Activated CD8-positive, alpha-beta T cell treated with anti-CD3 and anti-CD28 coated beads, Interleukin-2, amount 10 ng/mL, durations not matched to agents 7 days and 5 days (primary cell): ENCODE measurements at regions of chr1 and their contacts with region 1.

Region 1: GRCh38 chr1:245045087-245045881 is 109.5 kb upstream of the KIF26B start:
- DNase-seq: no peak
- ATAC-seq: no peak
- H3K4me3 Mint-ChIP-seq: no peak overlapping the region
- H3K27ac Mint-ChIP-seq: no peak overlapping the region
- H3K4me1 Mint-ChIP-seq: peaks cover 9% of the 10 kb centered on the region
- H3K27me3 Mint-ChIP-seq: peaks cover 2% of the 10 kb centered on the region

Region 2: GRCh38 chr1:244801246-244801645 is 244.0 kb before region 1 on chr1:
- CTCF ChIA-PET with region 1: interaction called, 102 read pairs
- POLR2A ChIA-PET with region 1: no interaction called
- DNase-seq: peak; percentile 65
- ATAC-seq: peak; percentile 78
- H3K4me3 Mint-ChIP-seq: no peak overlapping the region
- H3K27ac Mint-ChIP-seq: no peak overlapping the region
- H3K4me1 Mint-ChIP-seq: peaks cover 5% of the 10 kb centered on the region
- H3K27me3 Mint-ChIP-seq: peaks cover 5% of the 10 kb centered on the region

Region 3: GRCh38 chr1:244854865-244855578 is 190.3 kb before region 1 on chr1:
- CTCF ChIA-PET with region 1: interaction called, 41 read pairs
- POLR2A ChIA-PET with region 1: no interaction called
- DNase-seq: no peak
- ATAC-seq: peak; percentile 62
- H3K4me3 Mint-ChIP-seq: peak overlapping the region; percentile 48
- H3K27ac Mint-ChIP-seq: peak overlapping the region; percentile 72
- H3K4me1 Mint-ChIP-seq: peaks cover 83% of the 10 kb centered on the region
- H3K27me3 Mint-ChIP-seq: no peaks in the 10 kb centered on the region

Region 4: DNA sequence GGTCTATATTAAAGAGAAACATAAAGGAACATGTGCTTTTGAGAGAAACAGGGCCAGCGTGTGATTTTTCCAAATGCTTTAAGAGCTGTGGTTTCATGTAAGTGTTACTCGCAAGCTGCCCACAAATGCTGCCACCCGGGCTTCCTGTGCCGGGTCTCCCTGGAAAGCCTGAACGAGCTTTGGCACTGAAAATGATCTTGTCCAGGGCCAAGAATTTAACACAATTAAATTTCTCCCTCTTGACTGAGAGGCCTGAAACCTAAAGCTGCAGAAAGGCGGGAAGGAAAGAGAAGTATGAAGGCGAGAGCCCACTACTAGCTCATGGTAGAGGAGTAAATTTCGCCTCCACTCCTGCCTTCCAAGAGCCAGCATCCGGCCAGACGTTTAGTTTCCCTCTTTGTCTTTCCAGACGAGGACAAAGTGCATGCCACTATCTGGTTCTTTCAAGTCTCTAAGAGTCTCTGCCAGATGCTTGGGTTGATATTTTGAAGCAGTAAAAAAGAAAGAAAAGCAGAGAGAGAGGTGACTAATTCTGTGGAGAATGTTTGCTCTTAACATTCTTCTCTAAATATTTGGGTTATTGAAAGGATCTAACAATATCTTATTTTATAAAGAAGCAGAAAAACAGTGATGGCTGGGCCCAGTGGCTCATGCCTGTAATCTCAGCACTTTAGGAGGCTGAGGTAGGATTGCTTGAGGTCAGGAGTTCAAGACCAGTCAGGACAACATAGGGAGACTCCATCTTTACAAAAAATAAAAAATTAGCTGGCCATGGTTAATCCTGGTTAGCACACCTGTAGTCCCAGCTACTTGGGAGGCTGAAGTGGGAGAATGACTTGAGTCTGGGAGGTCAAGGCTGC is 80.9 kb before region 1 on chr1:
- CTCF ChIA-PET with region 1: interaction called, 13 read pairs
- POLR2A ChIA-PET with region 1: no interaction called
- DNase-seq: peak; percentile 25
- ATAC-seq: peak; percentile 28
- H3K4me3 Mint-ChIP-seq: no peak overlapping the region
- H3K27ac Mint-ChIP-seq: no peak overlapping the region
- H3K4me1 Mint-ChIP-seq: peaks cover 17% of the 10 kb centered on the region
- H3K27me3 Mint-ChIP-seq: no peaks in the 10 kb centered on the region

Region 5: DNA sequence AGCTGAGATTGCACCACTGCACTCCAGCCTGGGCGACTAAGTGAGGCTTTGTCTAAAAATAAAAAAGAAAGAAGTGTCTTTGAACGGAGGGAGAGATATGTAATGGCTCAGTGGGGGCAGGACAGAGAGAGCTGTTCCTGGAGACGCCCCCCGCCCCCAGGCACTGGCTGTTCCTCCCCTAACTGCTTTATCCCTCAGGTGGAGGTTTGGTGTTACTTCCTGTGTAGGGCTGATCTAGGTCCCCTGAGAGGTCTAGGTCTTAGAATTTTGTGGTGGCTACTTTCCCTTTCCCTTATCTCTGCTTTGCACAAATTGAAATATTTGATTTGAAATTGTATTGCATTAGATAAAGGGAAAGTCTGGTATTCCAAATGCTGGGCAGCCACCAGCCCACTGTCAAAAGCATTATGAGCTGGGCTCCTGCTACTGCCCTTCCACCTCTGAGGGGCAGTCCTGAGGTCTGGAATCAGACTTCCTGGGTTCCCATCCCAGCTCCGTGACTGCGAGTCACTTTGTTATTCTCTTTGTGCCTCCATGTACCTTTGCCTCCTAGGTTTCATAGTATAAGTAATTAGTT is 25.3 kb before region 1 on chr1:
- CTCF ChIA-PET with region 1: interaction called, 16 read pairs
- POLR2A ChIA-PET with region 1: no interaction called
- DNase-seq: no peak
- ATAC-seq: no peak
- H3K4me3 Mint-ChIP-seq: no peak overlapping the region
- H3K27ac Mint-ChIP-seq: no peak overlapping the region
- H3K4me1 Mint-ChIP-seq: peaks cover 16% of the 10 kb centered on the region
- H3K27me3 Mint-ChIP-seq: no peaks in the 10 kb centered on the region

Region 6: DNA sequence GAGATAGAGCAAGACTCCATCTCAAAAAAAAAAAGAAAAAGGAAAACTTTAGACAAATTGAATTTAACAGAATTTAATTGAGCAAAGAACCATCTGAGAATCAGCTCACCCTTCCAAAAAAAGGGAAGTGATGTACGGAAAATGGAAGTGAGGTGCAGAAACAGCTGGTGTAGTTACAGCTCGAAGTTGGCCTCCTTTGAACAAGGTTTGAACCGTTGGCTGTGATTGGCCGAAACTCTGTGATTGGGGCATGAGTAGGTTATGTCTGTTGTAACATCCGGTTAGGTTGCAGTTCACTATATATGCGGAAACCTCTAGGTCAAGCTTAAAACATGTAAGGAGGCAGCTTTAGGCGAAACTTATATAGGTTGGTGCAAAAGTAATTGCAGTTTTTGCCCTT is 11.6 kb after region 1 on chr1:
- CTCF ChIA-PET with region 1: interaction called, 26 read pairs
- POLR2A ChIA-PET with region 1: no interaction called
- DNase-seq: no peak
- ATAC-seq: no peak
- H3K4me3 Mint-ChIP-seq: no peak overlapping the region
- H3K27ac Mint-ChIP-seq: no peak overlapping the region
- H3K4me1 Mint-ChIP-seq: peaks cover 11% of the 10 kb centered on the region
- H3K27me3 Mint-ChIP-seq: peaks cover under 1% of the 10 kb centered on the region

Region 7: GRCh38 chr1:245099401-245099800 is 54.1 kb after region 1 on chr1:
- CTCF ChIA-PET with region 1: no interaction called
- POLR2A ChIA-PET with region 1: no interaction called
- DNase-seq: no peak
- ATAC-seq: no peak
- H3K4me3 Mint-ChIP-seq: no peak overlapping the region
- H3K27ac Mint-ChIP-seq: no peak overlapping the region
- H3K4me1 Mint-ChIP-seq: no peaks in the 10 kb centered on the region
- H3K27me3 Mint-ChIP-seq: no peaks in the 10 kb centered on the region